ENCODE measurements at regions of chr7 and their contacts with region 1.

Region 1: DNA sequence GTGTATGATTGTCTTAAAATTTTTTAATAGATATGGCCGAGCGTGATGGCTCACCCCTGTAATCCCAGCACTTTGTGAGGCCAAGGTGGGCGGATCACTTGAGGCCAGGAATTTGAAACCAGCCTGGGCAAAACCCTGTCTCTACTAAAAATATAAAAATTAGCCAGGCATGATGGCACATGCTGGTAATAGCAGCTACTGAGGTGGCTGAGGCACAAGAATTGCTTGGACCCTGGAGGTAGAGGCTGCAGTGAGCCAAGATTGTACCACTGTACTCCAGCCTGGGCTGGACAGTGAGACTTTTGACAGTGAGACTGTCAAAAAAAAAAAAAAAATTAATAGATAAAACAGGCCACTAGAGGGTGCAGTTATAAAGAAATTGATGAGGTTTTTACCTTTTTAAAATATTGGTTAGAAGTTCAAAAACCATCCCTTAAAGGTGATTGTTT is 20.5 kb downstream of the NOM1 start:
- DNase-seq: no peak
- H3K4me3 ChIP-seq: no peak overlapping the region
- H3K27ac ChIP-seq: no peak overlapping the region
- H3K4me1 ChIP-seq: no peaks in the 10 kb centered on the region
- H3K27me3 ChIP-seq: no peaks in the 10 kb centered on the region
- CTCF ChIP-seq: peak; percentile 23 to 46 (median 41)
- EP300 ChIP-seq: no peak
- POLR2A ChIP-seq: no peak

Region 2: DNA sequence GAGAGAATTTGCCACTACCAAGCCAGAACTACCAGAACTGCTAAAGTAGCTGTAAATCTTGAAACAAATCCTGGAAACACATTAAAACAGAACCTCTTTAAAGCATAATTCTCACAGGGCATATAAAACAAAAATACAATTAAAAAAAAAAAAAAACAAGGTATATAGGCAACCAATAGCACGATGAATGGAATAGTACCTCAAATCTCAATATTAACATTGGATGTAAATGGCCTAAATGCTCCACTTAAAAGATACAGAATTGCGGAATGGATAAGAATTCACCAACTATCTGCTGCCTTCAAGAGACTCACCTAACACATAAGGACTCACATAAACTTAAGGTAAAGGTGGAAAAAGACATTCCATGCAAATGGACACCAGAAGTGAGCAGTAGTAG is 94.2 kb before region 1 on chr7:
- in situ Hi-C with region 1: no loop called
- intact Hi-C with region 1: no loop called
- DNase-seq: no peak
- H3K4me3 ChIP-seq: no peak overlapping the region
- H3K27ac ChIP-seq: no peak overlapping the region
- H3K4me1 ChIP-seq: no peaks in the 10 kb centered on the region
- H3K27me3 ChIP-seq: no peaks in the 10 kb centered on the region
- CTCF ChIP-seq: no peak
- EP300 ChIP-seq: no peak
- POLR2A ChIP-seq: no peak

Region 3: DNA sequence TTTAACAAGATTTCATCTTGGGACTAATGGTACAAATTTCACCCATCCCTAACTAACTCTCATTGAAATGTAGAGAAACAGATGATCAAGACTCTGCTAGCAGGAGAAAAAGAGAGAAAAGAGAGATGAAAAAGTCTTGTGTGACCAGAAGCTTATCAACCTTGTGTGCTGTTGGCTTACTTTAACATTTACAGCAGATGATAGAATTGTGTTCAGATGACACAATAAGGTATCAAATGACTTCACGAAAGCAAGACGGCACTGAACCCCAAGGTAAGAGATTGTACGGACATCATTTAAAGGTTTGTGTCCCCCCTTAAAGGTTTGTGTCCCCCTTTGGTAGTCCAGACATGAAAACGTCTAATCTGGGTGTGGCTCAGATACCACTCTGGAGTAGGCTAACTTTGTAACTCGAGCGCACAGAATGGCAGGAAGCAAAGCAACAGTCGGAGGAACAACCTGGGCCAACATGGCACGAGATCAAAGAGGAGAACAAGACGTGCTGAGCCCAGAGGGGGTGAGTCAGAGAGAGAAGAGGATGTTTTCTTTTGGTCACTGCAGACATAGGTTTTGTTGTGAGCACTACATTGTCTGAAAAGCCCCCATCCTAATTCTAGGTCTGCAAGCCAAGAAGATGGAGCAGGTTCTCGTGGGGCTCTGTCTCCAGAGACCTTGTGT is 66.6 kb before region 1 on chr7:
- in situ Hi-C with region 1: loop called in 1 of 4 experiments (anchors 10 kb)
- intact Hi-C with region 1: no loop called
- DNase-seq: no peak
- H3K4me3 ChIP-seq: no peak overlapping the region
- H3K27ac ChIP-seq: peak overlapping the region in 1 of 4 donors; percentile 34
- H3K4me1 ChIP-seq: no peaks in the 10 kb centered on the region
- H3K27me3 ChIP-seq: no peaks in the 10 kb centered on the region
- CTCF ChIP-seq: no peak
- EP300 ChIP-seq: no peak
- POLR2A ChIP-seq: no peak

Region 4: GRCh38 chr7:157056246-157056645 is 86.2 kb after region 1 on chr7:
- in situ Hi-C with region 1: no loop called
- intact Hi-C with region 1: no loop called
- DNase-seq: no peak
- H3K4me3 ChIP-seq: no peak overlapping the region
- H3K27ac ChIP-seq: no peak overlapping the region
- H3K4me1 ChIP-seq: no peaks in the 10 kb centered on the region
- H3K27me3 ChIP-seq: peaks cover 21% of the 10 kb centered on the region
- CTCF ChIP-seq: no peak
- EP300 ChIP-seq: no peak
- POLR2A ChIP-seq: no peak

Region 5: DNA sequence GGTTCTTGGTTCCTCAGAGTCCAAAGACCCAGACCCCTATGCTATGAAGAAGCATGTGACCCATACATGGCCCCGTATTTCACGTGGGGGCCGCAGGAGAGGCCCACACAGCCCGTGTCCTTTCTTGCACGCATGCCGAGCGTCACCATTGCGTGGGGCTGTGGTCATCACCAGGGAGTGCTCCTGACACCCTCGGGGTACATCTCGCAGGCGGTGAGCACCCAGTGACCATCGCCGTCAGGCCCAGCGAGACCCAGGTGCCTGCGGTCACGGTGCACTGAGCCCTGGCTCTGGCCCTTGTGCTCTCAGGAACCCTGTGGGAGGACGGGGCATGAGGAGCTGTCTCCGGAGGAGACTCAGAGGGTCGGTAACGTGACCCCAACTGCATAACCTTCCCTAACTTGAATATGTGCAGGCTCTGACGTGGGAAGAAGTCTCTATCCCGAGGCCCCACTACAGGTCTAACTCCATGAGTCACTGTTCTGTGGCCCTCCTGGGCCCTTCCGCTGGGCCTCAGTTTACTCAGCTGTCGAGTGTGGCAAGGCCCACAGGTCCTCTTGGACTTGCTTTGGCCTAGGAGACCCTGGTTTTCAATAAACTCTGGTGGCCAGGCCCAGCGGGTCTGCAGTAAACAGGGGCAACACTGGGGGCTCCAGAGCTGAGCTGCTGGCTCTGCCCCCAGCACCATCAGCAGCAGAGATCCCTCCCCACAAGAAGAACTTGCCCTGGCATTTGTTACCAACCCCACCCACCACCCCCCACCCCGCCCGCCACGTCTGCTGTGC is 1113.7 kb after region 1 on chr7:
- in situ Hi-C with region 1: no loop called
- intact Hi-C with region 1: loop called (anchors 5 kb)
- DNase-seq: no peak
- H3K4me3 ChIP-seq: no peak overlapping the region
- H3K27ac ChIP-seq: no peak overlapping the region
- H3K4me1 ChIP-seq: no peaks in the 10 kb centered on the region
- H3K27me3 ChIP-seq: no peaks in the 10 kb centered on the region
- CTCF ChIP-seq: no peak
- EP300 ChIP-seq: no peak
- POLR2A ChIP-seq: no peak

Measured in transverse colon (tissue), 4 donors.